ENCODE measurements at regions of chr4 and their contacts with region 1.

Region 1: DNA sequence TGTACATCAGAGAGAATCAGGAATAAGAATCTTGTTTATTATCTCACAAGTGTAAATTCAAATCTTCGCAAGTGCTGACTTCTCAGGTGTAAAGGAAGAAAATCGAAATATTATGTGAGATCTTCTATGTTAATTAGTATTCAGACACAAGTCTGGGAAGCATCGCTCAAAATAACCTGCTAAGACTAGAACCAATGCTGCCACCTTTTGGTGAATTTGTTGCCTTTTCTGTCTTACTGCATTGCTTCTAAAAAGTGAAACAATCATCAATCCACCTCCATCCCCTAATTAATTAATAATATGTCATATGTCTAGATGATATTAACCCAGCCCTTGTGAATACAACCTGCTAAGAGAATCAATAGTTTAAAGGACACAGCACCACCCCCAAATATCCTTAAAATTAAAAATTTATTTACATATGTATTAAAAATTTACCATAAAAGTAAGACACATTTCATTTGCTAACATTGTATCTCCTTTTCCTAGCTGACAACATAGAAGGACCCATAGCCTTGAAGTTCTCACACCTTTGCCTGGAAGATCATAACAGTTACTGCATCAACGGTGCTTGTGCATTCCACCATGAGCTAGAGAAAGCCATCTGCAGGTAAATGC is 3.5 kb downstream of the EPGN start:
- DNase-seq: no peak
- H3K4me3 ChIP-seq: no peak overlapping the region
- H3K27ac ChIP-seq: no peak overlapping the region
- H3K4me1 ChIP-seq: no peaks in the 10 kb centered on the region
- H3K27me3 ChIP-seq: no peaks in the 10 kb centered on the region
- CTCF ChIP-seq: peak; percentile 40 to 52 (median 50)
- EP300 ChIP-seq: no peak
- POLR2A ChIP-seq: no peak

Region 2: DNA sequence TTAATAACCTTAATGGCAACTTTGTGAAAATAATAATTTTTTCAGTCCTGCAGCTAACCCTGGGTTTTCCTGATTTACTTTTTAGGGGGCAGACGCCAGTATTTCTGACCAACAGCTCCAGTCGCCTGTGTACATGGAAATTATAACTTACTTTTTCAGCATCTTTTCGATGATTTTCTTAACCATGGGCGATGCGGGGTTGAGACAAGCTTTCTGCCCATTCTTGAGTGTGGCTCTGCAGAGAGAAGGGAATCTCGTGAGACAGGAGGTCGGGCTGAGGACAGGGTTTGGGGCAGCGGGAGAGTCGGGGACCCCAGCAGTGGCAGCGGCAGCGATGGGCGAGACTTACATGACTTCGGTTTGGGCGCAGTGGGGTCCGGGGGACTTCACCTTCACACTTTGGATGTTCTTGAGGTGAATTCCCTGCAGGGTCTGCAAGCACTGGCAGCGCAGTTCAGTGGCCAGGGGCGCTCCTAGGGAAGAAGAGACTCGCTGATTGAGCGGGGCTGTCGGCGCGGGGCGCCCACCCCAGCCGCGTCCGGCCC is 213.3 kb before region 1 on chr4:
- intact Hi-C with region 1: no loop called
- DNase-seq: no peak
- H3K4me3 ChIP-seq: peak overlapping the region; percentile 61 to 79 (median 65)
- H3K27ac ChIP-seq: peak overlapping the region; percentile 70 to 81 (median 73)
- H3K4me1 ChIP-seq: peaks cover 0 to 23% (median 20%) of the 10 kb centered on the region in 4 donors
- H3K27me3 ChIP-seq: no peaks in the 10 kb centered on the region
- CTCF ChIP-seq: no peak
- EP300 ChIP-seq: no peak
- POLR2A ChIP-seq: no peak

Region 3: GRCh38 chr4:74189331-74190043 is 122.3 kb before region 1 on chr4:
- intact Hi-C with region 1: loop called (anchors 10 kb)
- DNase-seq: no peak
- H3K4me3 ChIP-seq: no peak overlapping the region
- H3K27ac ChIP-seq: no peak overlapping the region
- H3K4me1 ChIP-seq: no peaks in the 10 kb centered on the region
- H3K27me3 ChIP-seq: no peaks in the 10 kb centered on the region
- CTCF ChIP-seq: peak; percentile 35 to 65 (median 60)
- EP300 ChIP-seq: no peak
- POLR2A ChIP-seq: no peak

Region 4: GRCh38 chr4:74228691-74229640 is 82.8 kb before region 1 on chr4:
- intact Hi-C with region 1: loop called (anchors 10 kb)
- DNase-seq: no peak
- H3K4me3 ChIP-seq: no peak overlapping the region
- H3K27ac ChIP-seq: no peak overlapping the region
- H3K4me1 ChIP-seq: peaks cover 0 to 3% (median 0%) of the 10 kb centered on the region in 4 donors
- H3K27me3 ChIP-seq: no peaks in the 10 kb centered on the region
- CTCF ChIP-seq: peak; percentile 63 to 84 (median 69)
- EP300 ChIP-seq: no peak
- POLR2A ChIP-seq: no peak

Measured in esophagus muscularis mucosa (tissue), 4 donors.